ENCODE measurements at regions of chr15 and their contacts with region 1.

Region 1: GRCh38 chr15:44738340-44738984 is 2.1 kb downstream of the TRIM69 start:
- DNase-seq: peak in 4 of 5 donors; percentile 59 to 65 (median 64)
- H3K4me3 ChIP-seq: no peak overlapping the region
- H3K4me3 Mint-ChIP-seq: peak overlapping the region in 5 of 8 donors; percentile 32 to 68 (median 43)
- H3K27ac ChIP-seq: peak overlapping the region; percentile 19
- H3K27ac Mint-ChIP-seq: peak overlapping the region; percentile 77 to 93 (median 87)
- H3K4me1 ChIP-seq: peaks cover 54% of the 10 kb centered on the region
- H3K4me1 Mint-ChIP-seq: peaks cover 35 to 55% (median 48%) of the 10 kb centered on the region in 4 donors
- H3K27me3 ChIP-seq: no peaks in the 10 kb centered on the region
- H3K27me3 Mint-ChIP-seq: no peaks in the 10 kb centered on the region

Region 2: DNA sequence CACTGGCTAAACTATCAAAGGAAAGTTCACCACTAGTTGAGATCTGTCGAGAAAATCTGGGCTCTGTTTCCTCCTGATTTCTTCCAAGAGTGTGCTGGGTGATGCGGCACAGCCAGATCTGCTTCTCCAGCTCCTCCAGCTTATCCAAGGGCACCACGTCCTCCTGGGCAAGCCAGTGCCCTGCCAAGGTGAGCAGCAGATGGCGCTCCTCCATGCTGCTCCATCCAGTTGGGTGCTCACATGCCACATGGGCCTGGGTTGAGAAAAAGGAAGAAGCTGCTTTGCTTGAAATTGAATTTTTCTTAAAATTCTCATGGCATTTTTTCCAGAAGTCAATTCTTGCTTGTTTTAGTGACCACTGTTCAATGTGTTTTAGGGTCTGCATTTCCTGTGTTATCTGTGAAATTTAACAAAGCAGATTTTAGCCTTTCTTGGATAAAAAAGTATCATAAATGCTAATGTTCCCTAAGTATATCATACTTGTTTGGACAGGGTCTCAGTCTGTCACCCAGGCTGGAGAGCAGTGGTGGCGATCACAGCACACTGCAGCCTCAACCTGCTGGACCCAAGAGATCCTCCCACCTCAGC is 154.2 kb before region 1 on chr15:
- CTCF ChIA-PET with region 1: interaction called, 107 read pairs
- POLR2A ChIA-PET with region 1: interaction called, 6 read pairs
- intact Hi-C with region 1: no loop called
- DNase-seq: peak; percentile 46 to 53 (median 52)
- H3K4me3 ChIP-seq: no peak overlapping the region
- H3K4me3 Mint-ChIP-seq: no peak overlapping the region
- H3K27ac ChIP-seq: no peak overlapping the region
- H3K27ac Mint-ChIP-seq: peak overlapping the region in 6 of 7 donors; percentile 12 to 86 (median 62)
- H3K4me1 ChIP-seq: peaks cover 2% of the 10 kb centered on the region
- H3K4me1 Mint-ChIP-seq: peaks cover 5 to 19% (median 12%) of the 10 kb centered on the region in 4 donors
- H3K27me3 ChIP-seq: no peaks in the 10 kb centered on the region
- H3K27me3 Mint-ChIP-seq: no peaks in the 10 kb centered on the region

Region 3: DNA sequence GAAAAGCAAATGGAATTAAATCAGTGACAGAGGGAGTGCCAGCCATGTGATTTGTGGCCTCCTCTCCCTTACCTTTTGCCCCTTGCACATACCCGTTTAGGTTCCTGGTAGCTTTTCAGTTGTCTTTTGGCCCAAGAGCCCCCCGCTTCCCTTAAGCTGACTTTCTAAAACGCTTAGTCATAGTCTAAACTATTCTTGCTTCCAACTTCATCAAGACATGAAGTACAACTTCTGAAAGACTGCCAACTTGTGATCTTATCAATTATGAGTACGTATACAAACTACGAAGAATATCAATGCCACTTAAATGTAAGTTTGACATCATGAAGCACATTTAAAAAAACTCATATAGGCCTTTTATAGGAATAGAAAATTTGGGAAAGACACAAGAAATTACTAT is 139.6 kb before region 1 on chr15:
- CTCF ChIA-PET with region 1: interaction called, 107 read pairs
- POLR2A ChIA-PET with region 1: interaction called, 12 read pairs
- intact Hi-C with region 1: no loop called
- DNase-seq: no peak
- H3K4me3 ChIP-seq: no peak overlapping the region
- H3K4me3 Mint-ChIP-seq: no peak overlapping the region
- H3K27ac ChIP-seq: peak overlapping the region; percentile 8
- H3K27ac Mint-ChIP-seq: peak overlapping the region; percentile 2 to 93 (median 81)
- H3K4me1 ChIP-seq: peaks cover 20% of the 10 kb centered on the region
- H3K4me1 Mint-ChIP-seq: peaks cover 15 to 36% (median 20%) of the 10 kb centered on the region in 4 donors
- H3K27me3 ChIP-seq: no peaks in the 10 kb centered on the region
- H3K27me3 Mint-ChIP-seq: no peaks in the 10 kb centered on the region

Region 4: DNA sequence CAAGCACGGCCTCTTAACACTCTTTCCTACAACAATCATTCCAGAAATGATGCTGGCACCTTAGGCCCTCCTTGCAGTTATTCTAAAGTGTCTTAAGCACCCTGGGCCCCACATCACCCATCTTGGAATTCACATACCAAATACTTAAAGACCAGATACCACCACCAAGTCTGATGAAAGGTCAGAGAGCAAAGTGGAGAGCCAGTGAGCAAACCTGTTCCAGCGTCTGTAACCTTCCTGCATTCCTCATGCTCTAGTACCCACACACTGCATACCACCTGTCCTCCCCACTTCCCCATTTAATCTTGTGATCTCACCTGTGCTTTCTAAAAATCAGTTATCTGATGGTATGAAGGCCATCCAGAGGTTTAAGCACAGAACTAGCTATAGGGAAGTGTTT is 68.0 kb before region 1 on chr15:
- CTCF ChIA-PET with region 1: interaction called, 821 read pairs
- POLR2A ChIA-PET with region 1: interaction called, 5,737 read pairs
- intact Hi-C with region 1: no loop called
- DNase-seq: no peak
- H3K4me3 ChIP-seq: no peak overlapping the region
- H3K4me3 Mint-ChIP-seq: peak overlapping the region in 7 of 8 donors; percentile 15 to 80 (median 71)
- H3K27ac ChIP-seq: peak overlapping the region; percentile 40
- H3K27ac Mint-ChIP-seq: peak overlapping the region; percentile 89 to 96 (median 96)
- H3K4me1 ChIP-seq: peaks cover 98% of the 10 kb centered on the region
- H3K4me1 Mint-ChIP-seq: peaks cover 67 to 96% (median 89%) of the 10 kb centered on the region in 4 donors
- H3K27me3 ChIP-seq: no peaks in the 10 kb centered on the region
- H3K27me3 Mint-ChIP-seq: no peaks in the 10 kb centered on the region

Region 5: GRCh38 chr15:44682211-44682610 is 56.3 kb before region 1 on chr15:
- CTCF ChIA-PET with region 1: interaction called, 35 read pairs
- POLR2A ChIA-PET with region 1: interaction called, 5,737 read pairs
- intact Hi-C with region 1: no loop called
- DNase-seq: no peak
- H3K4me3 ChIP-seq: peak overlapping the region in 1 of 2 donors; percentile 13
- H3K4me3 Mint-ChIP-seq: peak overlapping the region in 7 of 8 donors; percentile 64 to 82 (median 75)
- H3K27ac ChIP-seq: peak overlapping the region; percentile 70
- H3K27ac Mint-ChIP-seq: peak overlapping the region; percentile 86 to 96 (median 93)
- H3K4me1 ChIP-seq: peaks cover 75% of the 10 kb centered on the region
- H3K4me1 Mint-ChIP-seq: peaks cover 66 to 99% (median 83%) of the 10 kb centered on the region in 4 donors
- H3K27me3 ChIP-seq: no peaks in the 10 kb centered on the region
- H3K27me3 Mint-ChIP-seq: no peaks in the 10 kb centered on the region